ENCODE measurements at regions of chr5 and their contacts with region 1.

Region 1: DNA sequence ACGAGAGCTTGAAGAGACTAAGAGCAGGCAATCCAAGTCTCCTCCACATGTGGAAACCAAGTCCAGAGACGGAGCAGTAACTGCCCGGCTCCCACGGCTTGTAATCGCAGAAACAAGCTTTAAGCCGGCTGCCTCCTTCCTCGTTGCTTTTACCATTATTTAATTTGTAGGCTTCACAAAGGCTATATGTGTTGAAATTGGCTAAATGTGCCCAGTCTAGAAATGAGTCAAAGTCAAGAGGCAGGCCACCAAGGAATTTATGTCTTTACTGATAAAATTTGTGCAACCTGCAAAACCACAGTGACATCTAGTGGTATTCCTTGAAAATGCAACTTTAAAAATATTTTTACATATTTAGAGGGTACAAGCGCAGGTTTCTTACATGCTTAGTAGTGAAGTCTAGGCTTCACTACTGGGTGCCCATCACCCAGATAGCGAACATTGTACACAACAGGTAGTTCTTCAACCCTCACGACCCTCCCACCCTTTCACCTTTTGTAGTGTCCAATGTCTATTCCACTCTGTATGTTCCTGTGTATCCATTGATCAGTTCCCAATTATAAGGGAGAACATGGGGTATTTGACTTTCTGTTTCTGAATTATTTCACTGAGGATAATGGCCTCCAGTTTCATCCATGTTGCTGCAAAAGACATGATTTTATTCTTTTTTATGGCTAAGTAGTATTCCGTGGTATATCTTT is 33.5 kb upstream of the EBF1 start:
- DNase-seq: peak; percentile 79
- ATAC-seq: peak; percentile 78
- H3K4me3 ChIP-seq: peak overlapping the region; percentile 48
- H3K27ac ChIP-seq: peak overlapping the region; percentile 45
- H3K4me1 ChIP-seq: peaks cover 22% of the 10 kb centered on the region
- H3K27me3 ChIP-seq: peaks cover 2% of the 10 kb centered on the region; the same call in 1 of the 2 replicates
- CTCF ChIP-seq: peak; percentile 77

Region 2: DNA sequence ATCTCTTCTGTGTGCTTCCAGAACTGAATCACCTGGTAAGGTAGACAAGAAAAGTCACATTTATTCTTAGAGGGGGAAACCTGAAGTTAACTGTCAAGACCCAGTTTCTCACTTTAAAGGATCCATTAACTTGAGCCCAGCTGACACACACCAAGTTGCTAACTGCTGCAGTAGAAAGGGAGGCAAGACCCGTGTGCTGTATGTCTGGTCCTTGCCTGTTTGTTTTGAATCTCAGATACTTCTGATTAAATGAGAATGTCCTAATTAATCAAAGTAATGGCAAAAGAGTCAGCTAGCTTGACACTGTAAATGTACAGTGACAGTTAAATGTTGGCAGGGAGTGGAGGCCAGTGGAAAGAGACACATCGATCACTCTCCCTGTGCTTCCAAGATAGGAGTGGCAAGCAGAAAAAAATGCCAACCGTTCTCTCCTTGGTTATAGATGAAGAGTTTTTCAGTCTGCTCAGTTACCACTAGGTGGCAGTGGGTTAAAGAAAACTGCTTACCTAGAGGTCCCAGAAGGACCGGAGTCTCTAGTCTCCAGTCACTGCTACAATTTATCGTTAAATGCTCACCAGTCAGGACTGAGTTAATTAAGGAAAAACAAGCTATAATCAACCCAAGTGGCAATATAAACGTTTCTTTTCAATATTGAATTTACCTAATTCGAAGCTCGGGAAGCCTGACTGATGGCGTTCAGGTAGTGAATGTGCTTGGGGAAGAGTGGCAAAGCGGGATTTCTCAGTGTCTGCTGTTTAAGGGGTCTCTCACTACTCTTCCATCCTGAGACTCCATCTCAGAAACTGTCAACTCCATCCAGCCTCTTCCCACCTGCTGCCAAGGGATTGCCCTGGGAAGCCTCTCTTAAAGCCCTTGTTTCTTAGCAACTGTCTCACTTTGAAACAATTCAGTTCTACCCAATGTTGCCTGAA is 1371.2 kb before region 1 on chr5:
- CTCF ChIA-PET with region 1: no interaction called
- POLR2A ChIA-PET with region 1: no interaction called
- intact Hi-C with region 1: loop called (anchors 10 kb)
- DNase-seq: peak; percentile 86
- ATAC-seq: peak; percentile 98
- H3K4me3 ChIP-seq: no peak overlapping the region
- H3K27ac ChIP-seq: no peak overlapping the region
- H3K4me1 ChIP-seq: peaks cover 7% of the 10 kb centered on the region; the same call in 1 of the 2 replicates
- H3K27me3 ChIP-seq: no peaks in the 10 kb centered on the region
- CTCF ChIP-seq: peak; percentile 98

Region 3: DNA sequence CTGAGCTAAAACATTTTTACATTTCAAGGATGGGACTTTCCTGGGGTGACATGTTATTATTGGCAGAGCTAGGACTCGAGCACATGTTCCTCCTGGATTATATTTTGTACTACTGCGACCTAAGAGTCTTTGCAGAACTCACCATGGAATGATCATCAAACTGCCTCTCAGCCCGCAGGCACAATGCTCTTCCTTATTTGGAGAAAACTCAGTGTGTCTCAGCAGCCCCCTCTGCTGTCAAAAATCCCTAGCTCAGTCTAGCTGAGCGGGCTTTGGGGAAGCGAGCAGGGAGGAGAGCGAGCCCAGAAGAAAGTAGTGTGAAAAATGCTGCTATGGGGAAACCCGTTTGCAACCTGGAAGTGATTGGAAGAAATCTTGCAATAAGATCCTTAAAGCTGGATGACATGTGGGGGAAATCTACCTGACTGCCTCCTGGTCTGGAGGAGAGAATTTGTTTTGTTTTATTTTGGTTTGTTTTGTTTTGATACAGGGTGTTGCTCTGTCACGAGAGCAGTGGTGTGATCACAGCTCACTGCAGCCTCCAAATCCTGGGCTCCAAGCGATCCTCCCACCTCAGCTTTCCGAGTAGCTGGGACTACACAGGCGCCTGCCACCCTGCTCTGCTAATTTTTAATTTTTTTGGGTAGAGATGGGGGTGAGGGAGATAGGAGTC is 1184.3 kb before region 1 on chr5:
- CTCF ChIA-PET with region 1: no interaction called
- POLR2A ChIA-PET with region 1: no interaction called
- intact Hi-C with region 1: loop called (anchors 1 kb)
- DNase-seq: peak; percentile 99
- ATAC-seq: peak; percentile 99
- H3K4me3 ChIP-seq: peak overlapping the region; percentile 35
- H3K27ac ChIP-seq: no peak overlapping the region
- H3K4me1 ChIP-seq: peaks cover 8% of the 10 kb centered on the region
- H3K27me3 ChIP-seq: peaks cover 6% of the 10 kb centered on the region; the same call in 1 of the 2 replicates
- CTCF ChIP-seq: peak; percentile 99

Region 4: DNA sequence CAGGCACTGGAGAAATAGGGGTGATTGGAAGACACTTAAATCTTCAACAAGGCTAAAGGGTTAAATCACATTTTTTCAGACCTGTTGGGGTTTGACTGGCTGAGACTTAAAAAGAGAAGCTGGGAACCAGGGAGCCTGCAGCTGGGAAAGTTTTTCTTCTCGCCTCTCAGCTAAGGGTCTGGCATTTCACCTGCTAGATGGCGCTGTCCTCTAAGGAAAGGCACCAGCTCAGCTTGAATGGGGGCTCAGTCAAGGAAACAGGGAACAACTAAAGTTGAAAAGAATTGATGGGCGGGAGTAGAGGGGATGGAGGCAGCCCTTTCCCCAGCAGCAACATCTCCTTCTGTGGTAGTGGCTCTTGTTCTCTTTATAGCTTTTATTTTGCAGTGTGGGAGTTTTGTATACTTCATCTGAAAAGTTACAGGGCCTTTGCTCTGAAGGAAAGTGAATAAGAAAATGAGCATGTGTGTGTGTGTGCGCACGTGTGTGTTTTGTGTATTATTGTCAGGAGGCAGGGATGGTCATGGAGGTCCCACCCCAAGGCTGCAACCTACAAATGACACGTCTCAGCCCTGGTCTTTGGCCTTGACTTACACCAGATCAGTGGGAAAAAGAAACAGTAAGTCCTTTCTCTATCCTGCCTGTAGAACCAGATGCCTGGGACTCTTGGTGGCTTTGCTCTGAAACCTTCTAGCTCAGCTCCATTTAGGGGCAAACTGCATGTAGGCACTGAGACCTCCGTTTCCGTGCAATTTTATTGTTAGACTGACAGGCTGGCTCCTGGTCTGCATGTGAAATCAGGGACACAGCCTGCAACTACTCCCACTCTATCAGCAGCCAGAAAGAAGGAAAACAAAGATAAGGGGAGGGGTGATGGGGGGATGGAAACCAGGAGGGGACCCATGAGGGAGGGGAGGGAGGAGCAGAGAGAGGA is 958.0 kb before region 1 on chr5:
- CTCF ChIA-PET with region 1: interaction called, 6 read pairs
- POLR2A ChIA-PET with region 1: no interaction called
- intact Hi-C with region 1: loop called (anchors 1 kb)
- DNase-seq: peak; percentile 90
- ATAC-seq: peak; percentile 71
- H3K4me3 ChIP-seq: no peak overlapping the region
- H3K27ac ChIP-seq: no peak overlapping the region
- H3K4me1 ChIP-seq: peaks cover 15% of the 10 kb centered on the region
- H3K27me3 ChIP-seq: peaks cover 50% of the 10 kb centered on the region
- CTCF ChIP-seq: peak; percentile 99

Region 5: GRCh38 chr5:158886086-158886485 is 247.1 kb before region 1 on chr5:
- CTCF ChIA-PET with region 1: no interaction called
- POLR2A ChIA-PET with region 1: no interaction called
- intact Hi-C with region 1: no loop called
- DNase-seq: no peak
- ATAC-seq: no peak
- H3K4me3 ChIP-seq: no peak overlapping the region
- H3K27ac ChIP-seq: no peak overlapping the region
- H3K4me1 ChIP-seq: no peaks in the 10 kb centered on the region
- H3K27me3 ChIP-seq: no peaks in the 10 kb centered on the region
- CTCF ChIP-seq: no peak

Measured in PC-3 (cell line).